ENCODE measurements at regions of chr2 and their contacts with region 1.

Region 1: GRCh38 chr2:170715062-170715931 is at the start of gene SP5:
- H3K4me3 Mint-ChIP-seq: peak within 1 kb of the TSS; percentile 78
- H3K27ac Mint-ChIP-seq: no peak within 1 kb of the TSS
- H3K4me1 Mint-ChIP-seq: peaks cover 39% of the 10 kb centered on the region
- H3K27me3 Mint-ChIP-seq: peaks cover 88% of the 10 kb centered on the region

Region 2: GRCh38 chr2:169849720-169850119 is 865.6 kb before region 1 on chr2:
- intact Hi-C with region 1: no loop called
- H3K4me3 Mint-ChIP-seq: no peak overlapping the region
- H3K27ac Mint-ChIP-seq: no peak overlapping the region
- H3K4me1 Mint-ChIP-seq: peaks cover 15% of the 10 kb centered on the region
- H3K27me3 Mint-ChIP-seq: no peaks in the 10 kb centered on the region

Region 3: GRCh38 chr2:170361090-170361936 is 354.0 kb before region 1 on chr2:
- intact Hi-C with region 1: loop called (anchors 10 kb)
- H3K4me3 Mint-ChIP-seq: no peak overlapping the region
- H3K27ac Mint-ChIP-seq: no peak overlapping the region
- H3K4me1 Mint-ChIP-seq: peaks cover 5% of the 10 kb centered on the region
- H3K27me3 Mint-ChIP-seq: peaks cover 60% of the 10 kb centered on the region

Measured in dendritic cell treated with granulocyte-macrophage colony-stimulating factor and Interleukin-4, amounts not matched to agents 40 ng/mL and 50 ng/mL, for 4 days (primary cell).